Activated naive CD4-positive, alpha-beta T cell treated with anti-CD3 and anti-CD28 coated beads, Interleukin-2, amount 10 ng/mL, durations not matched to agents 7 days and 5 days (primary cell): ENCODE measurements at regions of chr4 and their contacts with region 1.

Region 1: GRCh38 chr4:44760142-44760898 is 34.0 kb upstream of the GNPDA2 start:
- DNase-seq: no peak
- H3K4me3 Mint-ChIP-seq: no peak overlapping the region
- H3K27ac Mint-ChIP-seq: no peak overlapping the region
- H3K4me1 Mint-ChIP-seq: no peaks in the 10 kb centered on the region
- H3K27me3 Mint-ChIP-seq: peaks cover 8% of the 10 kb centered on the region

Region 2: DNA sequence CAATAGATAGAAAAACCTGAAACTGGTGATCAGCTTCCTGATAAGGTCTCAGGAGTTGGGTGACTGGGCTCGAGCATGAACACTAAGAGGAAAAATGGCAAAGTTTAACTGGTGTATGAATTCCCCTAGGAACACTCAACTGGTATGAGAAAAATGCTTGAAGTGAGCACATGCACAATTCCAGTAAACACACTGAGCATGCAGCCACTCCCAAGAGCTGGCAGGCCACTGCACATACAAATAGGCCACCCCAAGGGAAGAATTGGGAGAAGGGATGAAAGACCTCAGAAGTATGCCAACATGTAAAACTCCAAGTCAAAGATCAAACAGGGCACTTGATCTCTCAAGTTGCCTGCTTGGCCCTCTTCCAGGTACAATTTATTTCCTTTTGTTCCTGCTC is 11.5 kb after region 1 on chr4:
- CTCF ChIA-PET with region 1: interaction called, 10 read pairs
- DNase-seq: no peak
- H3K4me3 Mint-ChIP-seq: no peak overlapping the region
- H3K27ac Mint-ChIP-seq: no peak overlapping the region
- H3K4me1 Mint-ChIP-seq: no peaks in the 10 kb centered on the region
- H3K27me3 Mint-ChIP-seq: no peaks in the 10 kb centered on the region